GM13976 (cell line): ENCODE measurements at regions of chr13 and their contacts with region 1.

Region 1: GRCh38 chr13:35210261-35210660 is 266.2 kb downstream of the MAB21L1 start:
- DNase-seq: no peak
- CTCF ChIP-seq: no peak

Region 2: DNA sequence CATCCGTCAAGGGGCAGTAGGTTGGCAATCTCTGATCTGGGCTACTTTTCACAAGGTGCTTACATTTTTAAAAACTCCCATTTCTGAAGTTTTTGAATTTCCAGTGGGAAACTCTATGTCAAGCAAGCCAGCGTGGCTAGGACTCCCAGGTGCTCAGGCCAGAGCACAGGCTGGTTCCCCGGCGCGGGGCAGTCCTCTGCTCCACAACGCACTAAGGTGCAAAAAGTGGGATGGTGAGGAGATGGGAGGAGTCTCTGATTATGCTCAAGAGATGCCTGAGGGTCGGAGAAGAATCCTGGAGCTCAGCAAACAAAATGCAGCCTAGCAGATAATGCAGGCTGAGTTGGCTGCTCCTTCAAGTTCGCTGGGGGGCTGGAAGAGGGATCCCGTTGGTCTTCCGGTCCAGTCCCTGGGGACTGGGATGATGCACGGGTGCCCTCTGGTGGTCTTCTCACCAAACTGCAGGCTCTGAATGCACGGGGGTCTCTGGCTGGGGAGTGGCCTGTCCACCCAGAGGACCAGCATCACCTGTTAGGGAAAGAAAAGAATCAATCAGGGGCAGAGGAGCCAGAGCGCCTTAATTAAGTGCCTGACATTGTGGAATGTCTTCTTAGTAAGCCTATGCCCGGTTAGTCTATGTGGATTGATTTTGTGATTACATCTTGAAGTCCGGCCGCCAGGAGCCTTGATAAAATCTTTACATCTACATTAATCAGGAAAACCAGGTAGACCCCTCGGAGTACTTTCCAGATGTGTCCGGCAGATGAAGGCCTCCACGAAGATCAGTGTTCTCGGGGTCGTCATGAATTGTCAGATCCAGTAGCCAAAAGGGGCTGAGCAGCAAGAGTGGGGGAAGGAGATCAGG is 510.7 kb after region 1 on chr13:
- in situ Hi-C with region 1: loop called (anchors 25 kb)
- DNase-seq: peak; percentile 70
- CTCF ChIP-seq: peak; percentile 64